ENCODE measurements at regions of chr2 and their contacts with region 1.

Region 1: DNA sequence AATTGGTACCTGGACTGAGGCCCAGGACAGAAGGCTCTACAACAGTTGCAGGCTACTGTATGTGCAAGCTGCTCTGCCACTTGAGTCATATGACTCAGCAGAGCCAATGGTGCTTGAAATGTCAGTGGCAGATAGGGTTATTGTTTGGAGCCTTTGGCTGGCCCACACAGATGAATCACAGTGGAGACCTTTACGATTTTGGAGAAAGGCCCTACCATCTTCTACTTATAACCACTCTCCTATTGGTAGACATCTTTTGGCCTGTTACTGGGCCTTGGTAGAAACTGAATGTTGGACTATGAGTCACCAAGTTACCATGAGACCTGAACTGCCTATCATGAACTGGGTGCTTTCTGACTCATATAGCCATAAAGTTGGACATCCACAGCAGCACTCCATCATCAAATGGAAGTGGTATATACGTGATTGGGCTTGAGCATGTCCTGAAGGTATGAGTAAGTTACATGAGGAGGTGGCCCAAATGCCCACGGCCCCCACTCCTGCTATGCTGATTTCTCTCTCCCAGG is 88.9 kb upstream of the NRXN1 start:
- DNase-seq: no peak
- H3K4me3 Mint-ChIP-seq: no peak overlapping the region
- H3K27ac Mint-ChIP-seq: no peak overlapping the region
- H3K4me1 Mint-ChIP-seq: no peaks in the 10 kb centered on the region
- H3K27me3 Mint-ChIP-seq: no peaks in the 10 kb centered on the region
- CTCF ChIP-seq: no peak

Region 2: GRCh38 chr2:50995610-50996009 is 125.2 kb before region 1 on chr2:
- CTCF ChIA-PET with region 1: no interaction called
- POLR2A ChIA-PET with region 1: no interaction called
- intact Hi-C with region 1: no loop called
- DNase-seq: no peak
- H3K4me3 Mint-ChIP-seq: no peak overlapping the region
- H3K27ac Mint-ChIP-seq: no peak overlapping the region
- H3K4me1 Mint-ChIP-seq: no peaks in the 10 kb centered on the region
- H3K27me3 Mint-ChIP-seq: no peaks in the 10 kb centered on the region
- CTCF ChIP-seq: no peak

Region 3: DNA sequence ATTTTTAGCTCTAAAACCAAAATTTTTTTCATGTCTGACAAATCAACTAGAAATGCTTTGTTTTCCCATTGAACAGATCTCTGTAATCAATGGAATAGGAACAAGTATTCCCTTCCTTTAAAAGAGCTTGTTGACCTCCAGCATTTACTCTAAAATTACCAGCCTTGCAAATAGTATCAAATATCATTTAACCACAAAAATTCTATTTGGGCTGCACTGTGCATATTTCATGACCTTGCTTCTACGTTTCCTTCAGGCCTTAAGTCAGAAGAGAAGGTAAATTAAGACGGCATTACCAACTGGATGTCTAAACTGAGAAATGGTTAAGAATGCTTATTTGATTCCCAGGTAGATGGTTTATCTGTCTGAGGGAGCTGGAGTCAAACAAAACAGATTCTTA is 55.5 kb before region 1 on chr2:
- CTCF ChIA-PET with region 1: no interaction called
- POLR2A ChIA-PET with region 1: no interaction called
- intact Hi-C with region 1: loop called (anchors 10 kb)
- DNase-seq: no peak
- H3K4me3 Mint-ChIP-seq: no peak overlapping the region
- H3K27ac Mint-ChIP-seq: no peak overlapping the region
- H3K4me1 Mint-ChIP-seq: no peaks in the 10 kb centered on the region
- H3K27me3 Mint-ChIP-seq: no peaks in the 10 kb centered on the region
- CTCF ChIP-seq: no peak

Measured in MCF 10A (cell line).